MCF 10A (cell line): ENCODE measurements at regions of chr11 and their contacts with region 1.

Region 1: DNA sequence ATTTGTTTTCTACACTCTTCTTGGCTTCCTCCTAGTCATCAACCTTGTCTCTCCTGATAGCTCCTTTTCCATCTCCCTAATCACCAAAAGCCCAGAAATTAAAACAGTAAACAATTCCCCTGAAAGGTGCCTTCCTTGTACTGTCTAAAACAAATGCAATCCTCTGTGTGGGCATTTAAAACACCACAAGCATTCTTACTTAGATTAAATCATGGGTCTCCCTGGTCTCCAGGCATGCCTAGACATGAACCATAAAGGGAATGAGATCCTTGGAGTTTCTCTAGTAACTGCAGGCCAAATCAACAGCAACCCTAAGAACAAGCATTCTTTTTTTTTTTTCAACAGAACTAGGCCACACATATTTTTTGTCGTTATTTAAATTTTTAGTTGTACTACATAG is 1.9 kb downstream of the BTG4 start:
- DNase-seq: peak; percentile 71
- H3K4me3 Mint-ChIP-seq: peak overlapping the region; percentile 1
- H3K27ac Mint-ChIP-seq: peak overlapping the region; percentile 97
- H3K4me1 Mint-ChIP-seq: peaks cover 16% of the 10 kb centered on the region
- H3K27me3 Mint-ChIP-seq: no peaks in the 10 kb centered on the region
- CTCF ChIP-seq: no peak

Region 2: GRCh38 chr11:110812086-110812733 is 698.1 kb before region 1 on chr11:
- CTCF ChIA-PET with region 1: no interaction called
- POLR2A ChIA-PET with region 1: no interaction called
- intact Hi-C with region 1: no loop called
- DNase-seq: no peak
- H3K4me3 Mint-ChIP-seq: no peak overlapping the region
- H3K27ac Mint-ChIP-seq: no peak overlapping the region
- H3K4me1 Mint-ChIP-seq: no peaks in the 10 kb centered on the region
- H3K27me3 Mint-ChIP-seq: peaks cover 12% of the 10 kb centered on the region
- CTCF ChIP-seq: no peak

Region 3: GRCh38 chr11:111524056-111524455 is 13.7 kb after region 1 on chr11:
- CTCF ChIA-PET with region 1: interaction called, 5 read pairs
- POLR2A ChIA-PET with region 1: interaction called, 11 read pairs
- intact Hi-C with region 1: no loop called
- DNase-seq: no peak
- H3K4me3 Mint-ChIP-seq: no peak overlapping the region
- H3K27ac Mint-ChIP-seq: no peak overlapping the region
- H3K4me1 Mint-ChIP-seq: peaks cover 22% of the 10 kb centered on the region
- H3K27me3 Mint-ChIP-seq: no peaks in the 10 kb centered on the region
- CTCF ChIP-seq: no peak